ENCODE measurements at regions of chr2 and their contacts with region 1.

Region 1: GRCh38 chr2:176454893-176455811 is 185.9 kb downstream of the MTX2 start:
- H3K4me3 ChIP-seq: no peak overlapping the region
- H3K27ac ChIP-seq: no peak overlapping the region
- H3K4me1 ChIP-seq: no peaks in the 10 kb centered on the region; the same call in 1 of the 2 replicates
- CTCF ChIP-seq: peak; percentile 48

Region 2: GRCh38 chr2:176151442-176152369 is 303.4 kb before region 1 on chr2 and contains the start of gene HOXD4:
- CTCF ChIA-PET with region 1: interaction called, 10 read pairs
- POLR2A ChIA-PET with region 1: no interaction called
- H3K4me3 ChIP-seq: peak within 1 kb of the TSS; percentile 66
- H3K27ac ChIP-seq: peak within 1 kb of the TSS; percentile 95
- H3K4me1 ChIP-seq: peaks cover 20% of the 10 kb centered on the region
- CTCF ChIP-seq: no peak

Region 3: DNA sequence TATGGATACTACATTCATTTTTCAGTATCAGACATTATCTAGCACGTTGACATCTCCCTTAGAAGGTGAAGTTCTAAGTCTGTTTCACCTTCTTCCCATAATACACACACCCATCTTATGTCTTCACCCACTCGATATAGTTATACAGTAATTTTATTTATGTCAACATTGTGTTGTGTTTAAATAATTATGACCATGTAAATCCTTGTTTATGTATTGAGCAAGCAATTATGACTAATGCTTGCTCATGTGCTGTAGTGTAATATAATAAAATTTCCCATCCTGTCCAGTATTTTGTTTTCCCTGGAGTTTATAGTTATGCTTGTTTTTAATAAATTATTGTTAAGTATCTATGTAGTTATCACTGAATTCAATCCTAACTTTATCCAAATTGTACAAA is 22.7 kb before region 1 on chr2:
- CTCF ChIA-PET with region 1: interaction called, 12 read pairs
- POLR2A ChIA-PET with region 1: no interaction called
- H3K4me3 ChIP-seq: no peak overlapping the region
- H3K27ac ChIP-seq: no peak overlapping the region
- H3K4me1 ChIP-seq: no peaks in the 10 kb centered on the region
- CTCF ChIP-seq: no peak

Region 4: DNA sequence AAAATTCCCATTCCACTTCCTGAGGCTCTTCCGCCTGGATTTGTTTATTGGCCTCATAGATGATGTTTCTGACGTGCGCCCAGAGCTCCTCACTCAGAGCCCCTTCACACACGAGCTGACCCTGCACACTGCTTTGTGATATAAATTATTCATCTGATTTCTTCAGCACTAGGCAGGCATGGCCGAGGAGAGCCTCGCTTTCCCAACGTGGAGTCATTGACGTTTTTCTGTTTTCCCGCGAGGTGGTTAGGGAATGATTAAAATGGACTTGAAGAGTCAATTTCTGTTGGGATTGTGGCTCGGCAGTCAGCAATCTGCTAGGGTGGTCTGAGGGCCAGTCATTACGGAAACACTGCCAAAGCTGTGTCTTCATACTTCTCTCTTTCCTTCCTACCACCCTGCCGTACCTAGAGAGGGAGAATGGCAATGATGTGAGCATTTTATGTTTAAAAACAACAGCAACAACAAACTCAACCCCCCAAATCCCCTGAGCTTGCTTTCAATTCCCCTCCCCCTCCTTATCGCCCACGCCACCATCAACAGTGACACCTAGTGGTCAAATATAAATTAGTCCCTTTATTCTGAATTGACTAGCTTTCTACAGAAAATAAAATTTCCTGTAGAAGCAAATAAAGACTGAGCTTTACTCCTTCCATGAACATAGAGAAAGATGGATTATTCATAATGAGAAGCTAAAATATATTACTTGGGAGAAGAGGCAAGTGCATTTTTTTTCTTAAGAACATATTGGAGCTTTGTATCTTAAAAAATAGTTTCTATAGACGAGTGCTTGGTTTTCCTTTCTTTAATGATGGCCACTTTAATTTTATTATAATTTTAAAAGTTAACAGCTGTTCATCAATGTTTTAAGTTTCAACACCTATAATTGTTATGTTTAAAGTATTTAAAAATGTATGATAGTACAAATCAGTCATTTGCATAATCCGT is 99.2 kb after region 1 on chr2:
- CTCF ChIA-PET with region 1: interaction called, 21 read pairs
- POLR2A ChIA-PET with region 1: interaction called, 5 read pairs
- H3K4me3 ChIP-seq: peak overlapping the region; percentile 17
- H3K27ac ChIP-seq: peak overlapping the region; percentile 92
- H3K4me1 ChIP-seq: peaks cover 7% of the 10 kb centered on the region; the same call in 1 of the 2 replicates
- CTCF ChIP-seq: peak; percentile 90

Measured in HEK293 (cell line).